Activated CD4-positive, alpha-beta T cell treated with anti-CD3 and anti-CD28 coated beads, Interleukin-2, amount 10 ng/mL, durations not matched to agents 24 days and 14 days (primary cell): ENCODE measurements at regions of chr15 and their contacts with region 1.

Region 1: GRCh38 chr15:38486936-38487335 is 33.0 kb downstream of the FAM98B start:
- DNase-seq: peak; percentile 53
- H3K4me3 Mint-ChIP-seq: peak overlapping the region; percentile 66
- H3K27ac Mint-ChIP-seq: peak overlapping the region; percentile 91
- H3K4me1 Mint-ChIP-seq: peaks cover 30% of the 10 kb centered on the region
- H3K27me3 Mint-ChIP-seq: no peaks in the 10 kb centered on the region

Region 2: GRCh38 chr15:38453971-38454695 is 32.8 kb before region 1 on chr15 and contains the start of gene FAM98B:
- intact Hi-C with region 1: loop called (anchors 2 kb)
- DNase-seq: peak; percentile 97
- H3K4me3 Mint-ChIP-seq: peak within 1 kb of the TSS; percentile 94
- H3K27ac Mint-ChIP-seq: peak within 1 kb of the TSS; percentile 95
- H3K4me1 Mint-ChIP-seq: peaks cover 27% of the 10 kb centered on the region
- H3K27me3 Mint-ChIP-seq: peaks cover 27% of the 10 kb centered on the region
- total RNA-seq, gene FAM98B: 64.0 and 71.6 TPM in 2 replicates

Region 3: GRCh38 chr15:39255760-39256159 is 768.8 kb after region 1 on chr15:
- intact Hi-C with region 1: no loop called
- DNase-seq: no peak
- H3K4me3 Mint-ChIP-seq: no peak overlapping the region
- H3K27ac Mint-ChIP-seq: no peak overlapping the region
- H3K4me1 Mint-ChIP-seq: peaks cover 15% of the 10 kb centered on the region
- H3K27me3 Mint-ChIP-seq: peaks cover 8% of the 10 kb centered on the region